AG04450 (cell line): ENCODE measurements at regions of chr11 and their contacts with region 1.

Region 1: GRCh38 chr11:10328314-10329090 is 23.6 kb downstream of the ADM start:
- DNase-seq: no peak
- H3K4me3 ChIP-seq: no peak overlapping the region
- H3K27ac ChIP-seq: no peak overlapping the region
- H3K27me3 ChIP-seq: no peaks in the 10 kb centered on the region
- CTCF ChIP-seq: no peak

Region 2: DNA sequence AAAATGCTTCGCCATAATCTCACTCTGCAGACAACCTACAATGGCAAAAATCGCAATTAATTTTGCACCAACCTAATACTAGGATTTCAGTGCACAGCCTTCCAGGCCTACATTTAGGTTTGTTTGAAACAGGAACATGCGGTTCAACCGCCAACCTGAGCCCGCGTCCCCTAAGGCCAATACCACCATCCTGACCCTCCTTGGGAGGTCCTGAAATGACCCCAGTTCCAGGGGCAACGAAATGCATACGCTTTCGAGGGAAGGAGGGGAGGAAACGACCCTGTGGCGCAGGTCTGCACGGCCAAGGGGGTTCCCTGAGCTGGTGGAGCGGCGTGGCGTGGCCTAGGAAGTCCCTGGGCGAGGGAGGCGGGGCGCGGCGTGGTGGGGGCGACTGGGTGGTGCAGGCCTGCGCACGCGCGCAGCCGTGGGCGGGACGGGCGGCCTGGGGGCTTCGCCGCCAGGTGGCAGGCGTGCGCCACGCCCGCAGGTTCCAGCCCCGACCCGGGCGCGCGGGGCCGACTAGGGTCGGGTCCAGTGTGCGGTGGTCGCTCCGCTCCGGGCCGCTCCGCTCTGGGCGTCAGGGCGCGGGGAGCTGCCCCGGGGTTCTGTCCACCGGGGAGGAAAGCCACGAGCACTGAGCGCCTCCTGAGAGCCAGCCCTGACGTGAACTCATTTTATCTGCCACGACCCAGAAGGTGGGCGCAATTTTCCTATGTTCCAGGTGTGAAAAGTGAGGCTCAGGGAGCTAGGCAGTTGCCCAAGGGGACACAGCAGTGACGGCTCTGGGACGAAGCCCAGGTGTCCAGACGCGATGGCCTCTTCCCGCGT is 570.5 kb before region 1 on chr11:
- CTCF ChIA-PET with region 1: interaction called, 6 read pairs
- POLR2A ChIA-PET with region 1: interaction called, 16 read pairs
- DNase-seq: no peak
- H3K4me3 ChIP-seq: peak overlapping the region; percentile 45
- H3K27ac ChIP-seq: peak overlapping the region; percentile 95
- H3K27me3 ChIP-seq: no peaks in the 10 kb centered on the region
- CTCF ChIP-seq: peak; percentile 51

Region 3: GRCh38 chr11:10351768-10352641 is 23.5 kb after region 1 on chr11:
- CTCF ChIA-PET with region 1: no interaction called
- POLR2A ChIA-PET with region 1: interaction called, 19 read pairs
- DNase-seq: peak; percentile 80
- H3K4me3 ChIP-seq: no peak overlapping the region
- H3K27ac ChIP-seq: peak overlapping the region; percentile 87
- H3K27me3 ChIP-seq: no peaks in the 10 kb centered on the region
- CTCF ChIP-seq: no peak

Region 4: GRCh38 chr11:10387206-10388083 is 58.9 kb after region 1 on chr11:
- CTCF ChIA-PET with region 1: no interaction called
- POLR2A ChIA-PET with region 1: interaction called, 11 read pairs
- DNase-seq: peak; percentile 92
- H3K4me3 ChIP-seq: no peak overlapping the region
- H3K27ac ChIP-seq: peak overlapping the region; percentile 93
- H3K27me3 ChIP-seq: no peaks in the 10 kb centered on the region
- CTCF ChIP-seq: peak; percentile 11; the same call in 1 of the 2 replicates